ENCODE measurements at regions of chrX and their contacts with region 1.

Region 1: DNA sequence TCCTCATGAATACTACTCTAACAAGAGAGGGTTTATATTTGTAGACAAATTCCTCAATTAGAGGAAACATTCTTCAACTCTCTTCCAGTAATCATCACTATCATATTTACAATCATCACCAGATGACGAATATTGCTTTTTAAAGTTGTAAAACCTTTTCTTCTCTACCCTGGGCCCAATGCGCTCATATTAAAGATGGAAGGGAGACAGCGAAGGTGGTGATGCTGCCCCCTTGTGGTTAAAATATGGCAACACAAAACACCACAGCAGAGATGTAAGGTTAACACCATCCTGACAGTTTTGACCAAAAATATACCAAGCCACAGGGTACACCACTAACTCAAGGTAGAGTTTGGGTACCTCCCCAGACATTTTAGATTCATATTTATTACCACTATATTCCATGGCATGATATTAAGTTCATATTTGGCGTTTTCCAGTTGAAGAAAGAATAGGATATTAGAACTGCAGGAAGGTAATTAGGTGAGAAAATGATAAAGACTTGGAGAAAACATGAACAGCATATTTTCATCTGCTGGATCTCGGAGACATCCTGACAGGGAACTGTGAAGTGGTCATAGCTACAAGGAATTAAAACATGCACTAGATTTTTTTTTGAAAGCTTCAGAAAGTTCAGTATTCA is 72.8 kb downstream of the SLC9A7 start:
- DNase-seq: no peak
- ATAC-seq: peak; percentile 65
- H3K4me3 Mint-ChIP-seq: no peak overlapping the region
- H3K27ac Mint-ChIP-seq: no peak overlapping the region
- H3K4me1 Mint-ChIP-seq: peaks cover 57% of the 10 kb centered on the region
- H3K27me3 Mint-ChIP-seq: no peaks in the 10 kb centered on the region
- CTCF ChIP-seq: no peak

Region 2: DNA sequence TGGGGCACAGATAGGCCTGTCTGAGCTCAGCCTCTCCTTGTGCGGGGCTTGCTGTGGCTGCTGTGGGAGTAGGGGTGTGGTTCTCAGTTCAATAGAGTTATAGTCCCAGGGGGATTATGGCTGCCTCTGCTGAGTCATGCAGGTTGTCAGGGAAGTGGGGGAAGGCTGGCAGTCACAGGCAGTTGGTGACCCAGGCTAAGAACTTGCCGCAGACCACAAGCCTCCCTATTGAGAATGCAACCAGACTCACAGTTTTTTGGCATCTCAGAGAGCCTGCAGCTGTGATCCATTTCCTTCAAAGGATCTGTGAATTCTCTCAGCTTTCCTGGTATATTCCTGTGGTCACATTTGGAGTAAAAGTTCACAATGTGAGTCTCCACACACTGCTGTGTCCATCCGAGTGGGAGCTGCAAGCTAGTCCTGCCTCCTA is 505.9 kb before region 1 on chrX:
- CTCF ChIA-PET with region 1: no interaction called
- POLR2A ChIA-PET with region 1: no interaction called
- intact Hi-C with region 1: no loop called
- DNase-seq: no peak
- ATAC-seq: peak; percentile 31
- H3K4me3 Mint-ChIP-seq: no peak overlapping the region
- H3K27ac Mint-ChIP-seq: no peak overlapping the region
- H3K4me1 Mint-ChIP-seq: no peaks in the 10 kb centered on the region
- H3K27me3 Mint-ChIP-seq: no peaks in the 10 kb centered on the region
- CTCF ChIP-seq: no peak

Region 3: DNA sequence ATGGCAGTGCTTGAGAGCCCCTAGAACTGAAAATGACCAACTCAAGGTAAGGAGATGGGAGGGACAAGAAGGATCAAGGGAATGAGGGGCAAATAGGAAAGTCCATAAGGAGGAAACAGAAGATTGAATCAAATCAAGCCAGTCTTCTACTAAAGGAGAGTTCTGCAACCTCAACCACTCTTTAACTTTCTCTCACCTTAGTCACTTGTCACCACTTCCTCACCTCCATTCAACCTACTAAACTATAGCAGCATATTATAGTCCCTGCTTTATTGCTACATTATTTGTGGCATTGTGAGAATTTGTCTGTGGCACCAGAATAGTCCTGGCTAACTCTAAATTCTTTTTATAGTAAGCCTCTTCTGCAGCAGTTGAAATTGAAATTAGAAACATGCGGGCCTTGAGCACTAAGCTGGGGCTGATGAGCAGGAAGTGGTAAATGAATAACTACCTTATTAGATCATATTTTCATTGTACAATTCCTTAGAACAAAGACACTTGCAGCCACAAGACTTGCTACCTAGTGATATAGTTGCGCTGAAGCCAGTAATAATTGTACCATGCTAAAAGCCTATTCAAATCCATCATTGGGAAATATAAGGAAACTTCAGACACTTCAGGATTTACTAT is 477.8 kb before region 1 on chrX:
- CTCF ChIA-PET with region 1: no interaction called
- POLR2A ChIA-PET with region 1: no interaction called
- intact Hi-C with region 1: no loop called
- DNase-seq: no peak
- ATAC-seq: no peak
- H3K4me3 Mint-ChIP-seq: no peak overlapping the region
- H3K27ac Mint-ChIP-seq: no peak overlapping the region
- H3K4me1 Mint-ChIP-seq: no peaks in the 10 kb centered on the region
- H3K27me3 Mint-ChIP-seq: no peaks in the 10 kb centered on the region
- CTCF ChIP-seq: no peak

Region 4: DNA sequence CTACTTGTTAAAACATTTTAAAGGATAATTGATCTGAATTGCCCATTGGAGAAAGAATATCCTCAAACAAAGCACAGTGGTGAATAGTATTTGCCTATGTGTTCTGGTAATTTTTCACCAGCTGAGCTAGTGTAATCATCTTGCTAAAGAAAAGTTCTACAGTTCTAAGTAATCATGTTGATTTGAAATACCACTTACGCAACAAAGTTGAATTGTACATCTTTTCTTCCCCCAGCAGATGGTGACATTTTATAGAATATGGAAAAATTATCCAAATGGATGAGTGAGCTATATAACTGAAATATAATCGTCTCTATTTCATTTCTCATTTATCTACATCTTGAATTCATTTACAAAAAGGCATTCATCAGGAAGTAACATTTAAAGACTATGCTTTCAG is 131.2 kb before region 1 on chrX:
- CTCF ChIA-PET with region 1: no interaction called
- POLR2A ChIA-PET with region 1: no interaction called
- intact Hi-C with region 1: loop called (anchors 1 kb)
- DNase-seq: no peak
- ATAC-seq: no peak
- H3K4me3 Mint-ChIP-seq: no peak overlapping the region
- H3K27ac Mint-ChIP-seq: no peak overlapping the region
- H3K4me1 Mint-ChIP-seq: no peaks in the 10 kb centered on the region
- H3K27me3 Mint-ChIP-seq: peaks cover 6% of the 10 kb centered on the region
- CTCF ChIP-seq: no peak